A549 (cell line): ENCODE measurements at regions of chr17 and their contacts with region 1.

Region 1: DNA sequence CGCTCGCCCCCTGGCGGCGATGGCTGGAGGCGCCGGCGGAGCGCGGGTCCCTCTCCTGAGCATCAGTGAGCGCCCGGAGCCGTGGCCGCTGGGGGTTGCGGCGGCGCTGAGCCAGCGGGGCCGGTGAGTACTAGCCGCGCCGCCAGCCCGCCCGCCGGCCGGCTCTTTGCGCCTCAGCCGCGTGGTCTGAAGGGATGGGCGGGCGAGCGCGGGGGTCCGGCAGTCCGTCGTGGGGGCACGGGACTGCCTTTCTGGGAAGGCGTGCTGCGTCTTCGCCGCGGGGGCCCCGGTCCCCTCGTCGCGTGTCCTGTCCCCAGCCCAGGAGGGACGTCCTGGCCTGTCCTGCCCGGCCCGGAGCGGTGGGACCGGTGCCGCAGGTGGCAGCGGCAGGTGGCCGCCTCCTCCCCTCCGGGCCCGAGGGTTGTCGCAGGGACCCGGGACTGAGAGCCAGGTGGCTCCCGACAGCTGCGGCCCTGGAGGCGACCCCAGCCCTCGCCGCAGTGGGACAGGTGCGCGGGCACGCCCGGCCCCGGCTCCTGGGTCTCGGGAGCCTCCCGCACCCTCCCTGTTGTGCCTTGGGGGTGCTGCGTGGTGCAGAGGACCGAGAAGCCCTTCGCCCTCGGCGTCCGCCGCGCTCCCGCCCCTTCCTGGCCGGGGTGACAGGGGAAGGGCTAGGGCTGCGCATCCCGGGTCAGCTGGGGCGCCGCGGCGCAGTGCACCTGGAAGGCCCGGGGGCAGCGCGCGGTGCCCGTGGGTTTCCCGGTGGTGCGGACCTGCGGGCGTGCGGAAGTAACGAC is at the start of gene SPECC1:
- DNase-seq: peak; percentile 48 to 87
- ATAC-seq: peak; percentile 85 to 94
- H3K4me3 ChIP-seq: peak within 1 kb of the TSS; percentile 63
- H3K27ac ChIP-seq: peak within 1 kb of the TSS; percentile 88 to 93
- H3K4me1 ChIP-seq: peaks cover 25% of the 10 kb centered on the region
- CTCF ChIP-seq: peak; percentile 16; the same call in 2 of the 3 replicates
- EP300 ChIP-seq: no peak
- POLR2A ChIP-seq: peak; percentile 41; the same call in 1 of the 2 replicates
- RAD21 ChIP-seq: peak; percentile 37 to 64; a peak in 3 of 5 replicates
- polyA plus RNA-seq, gene SPECC1: 40.1 and 45.1 TPM in 2 replicates

Region 2: DNA sequence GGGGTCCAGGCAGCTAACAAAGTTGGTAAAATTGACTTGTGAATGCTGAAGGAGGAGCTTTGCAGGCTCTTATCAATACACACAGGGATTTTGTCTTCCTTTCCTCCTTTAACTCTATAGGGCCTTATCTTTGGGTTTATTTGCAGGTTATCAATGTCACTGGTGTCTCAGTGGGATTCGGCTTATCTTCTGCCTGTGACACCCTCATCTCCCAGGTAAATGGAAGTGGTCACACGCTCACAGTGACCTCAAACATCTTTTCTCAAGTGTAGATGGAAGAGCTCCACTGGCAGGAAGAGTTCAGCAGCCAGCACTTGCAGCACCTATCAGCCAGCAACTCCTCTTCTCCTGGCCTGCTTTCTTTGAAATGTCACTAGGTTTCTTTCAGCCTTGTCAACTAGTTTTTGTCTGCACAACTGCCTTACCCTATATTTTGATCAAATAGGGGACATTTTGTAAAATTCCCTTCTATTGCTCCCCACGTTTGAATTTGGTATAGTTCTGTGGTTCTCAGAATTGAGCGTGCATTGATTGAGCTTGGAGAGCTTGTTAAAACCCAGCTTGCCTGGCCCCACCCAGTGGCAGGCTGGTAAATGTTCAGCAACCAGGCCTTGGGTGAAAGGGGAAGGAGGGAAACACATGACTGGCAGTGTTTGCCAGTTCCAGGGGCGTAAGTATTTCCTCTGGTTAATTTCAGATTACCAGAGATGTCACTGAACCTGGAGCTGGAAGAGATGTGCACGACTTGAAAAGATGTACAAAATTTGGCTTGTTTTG is 463.0 kb before region 1 on chr17:
- CTCF ChIA-PET with region 1: no interaction called
- POLR2A ChIA-PET with region 1: no interaction called
- DNase-seq: no peak
- ATAC-seq: peak; percentile 60 to 69; a peak in 4 of 6 replicates
- H3K4me3 ChIP-seq: no peak overlapping the region
- H3K27ac ChIP-seq: no peak overlapping the region
- H3K4me1 ChIP-seq: no peaks in the 10 kb centered on the region; the same call in 2 of the 3 replicates
- CTCF ChIP-seq: no peak
- EP300 ChIP-seq: no peak
- POLR2A ChIP-seq: no peak
- RAD21 ChIP-seq: peak in 1 of 2 experiments; percentile 11; a peak in 1 of 5 replicates

Region 3: DNA sequence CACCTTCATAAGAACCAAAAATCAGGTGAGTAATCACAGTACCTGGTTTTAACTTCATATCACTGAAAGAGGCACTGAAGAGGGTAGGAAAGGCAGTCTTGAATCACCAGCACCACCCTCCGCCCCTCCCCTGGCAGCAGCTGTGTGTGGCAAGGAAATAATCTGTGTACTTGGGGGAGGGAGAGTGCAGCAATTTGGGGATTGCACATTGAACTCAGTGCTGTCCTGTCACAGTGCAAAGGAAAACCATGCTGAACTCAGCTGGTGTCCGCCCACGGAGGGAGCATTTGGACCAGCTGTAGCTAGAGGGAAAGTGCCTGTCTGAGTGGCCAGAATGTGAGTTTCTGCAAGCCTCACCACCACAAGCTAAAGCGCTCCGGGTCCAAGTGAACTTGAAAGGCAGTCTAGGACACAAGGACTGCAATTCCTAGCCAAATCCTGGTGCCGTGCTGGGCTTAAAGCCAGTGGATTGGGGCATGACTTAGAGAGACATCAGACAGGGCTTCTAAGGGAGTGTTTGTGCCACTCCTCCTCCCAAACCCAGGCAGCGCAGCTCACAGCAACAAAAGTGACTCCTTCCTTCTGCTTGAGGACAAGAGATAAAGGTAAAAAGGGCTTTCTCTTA is 221.7 kb before region 1 on chr17:
- CTCF ChIA-PET with region 1: no interaction called
- POLR2A ChIA-PET with region 1: no interaction called
- DNase-seq: no peak
- ATAC-seq: no peak; a peak in 1 of 6 replicates
- H3K4me3 ChIP-seq: no peak overlapping the region
- H3K27ac ChIP-seq: no peak overlapping the region
- H3K4me1 ChIP-seq: no peaks in the 10 kb centered on the region
- CTCF ChIP-seq: no peak
- EP300 ChIP-seq: no peak
- POLR2A ChIP-seq: no peak
- RAD21 ChIP-seq: no peak

Region 4: GRCh38 chr17:19867064-19867313 is 142.5 kb before region 1 on chr17:
- CTCF ChIA-PET with region 1: interaction called, 8 read pairs
- POLR2A ChIA-PET with region 1: interaction called, 11 read pairs
- DNase-seq: peak; percentile 76 to 81
- ATAC-seq: peak; percentile 85 to 87
- H3K4me3 ChIP-seq: peak overlapping the region; percentile 77
- H3K27ac ChIP-seq: peak overlapping the region; percentile 84 to 92
- H3K4me1 ChIP-seq: peaks cover 15% of the 10 kb centered on the region; the same call in 2 of the 3 replicates
- CTCF ChIP-seq: peak; percentile 34; the same call in 2 of the 3 replicates
- EP300 ChIP-seq: no peak
- POLR2A ChIP-seq: peak; percentile 41
- RAD21 ChIP-seq: peak in 1 of 2 experiments; percentile 21; a peak in 1 of 5 replicates

Region 5: GRCh38 chr17:19877364-19877945 is 132.0 kb before region 1 on chr17:
- CTCF ChIA-PET with region 1: no interaction called
- POLR2A ChIA-PET with region 1: no interaction called
- DNase-seq: no peak
- ATAC-seq: no peak
- H3K4me3 ChIP-seq: no peak overlapping the region
- H3K27ac ChIP-seq: no peak overlapping the region
- H3K4me1 ChIP-seq: no peaks in the 10 kb centered on the region
- CTCF ChIP-seq: no peak
- EP300 ChIP-seq: no peak
- POLR2A ChIP-seq: no peak
- RAD21 ChIP-seq: no peak

Region 6: GRCh38 chr17:19992803-19993713 is 16.4 kb before region 1 on chr17:
- CTCF ChIA-PET with region 1: interaction called, 240 read pairs
- POLR2A ChIA-PET with region 1: interaction called, 10 read pairs
- DNase-seq: peak; percentile 77 to 94
- ATAC-seq: peak; percentile 98 to 100
- H3K4me3 ChIP-seq: peak overlapping the region; percentile 38
- H3K27ac ChIP-seq: peak overlapping the region; percentile 84
- H3K4me1 ChIP-seq: peaks cover 11% of the 10 kb centered on the region
- CTCF ChIP-seq: peak; percentile 97
- EP300 ChIP-seq: no peak
- POLR2A ChIP-seq: no peak
- RAD21 ChIP-seq: peak; percentile 98

Region 7: DNA sequence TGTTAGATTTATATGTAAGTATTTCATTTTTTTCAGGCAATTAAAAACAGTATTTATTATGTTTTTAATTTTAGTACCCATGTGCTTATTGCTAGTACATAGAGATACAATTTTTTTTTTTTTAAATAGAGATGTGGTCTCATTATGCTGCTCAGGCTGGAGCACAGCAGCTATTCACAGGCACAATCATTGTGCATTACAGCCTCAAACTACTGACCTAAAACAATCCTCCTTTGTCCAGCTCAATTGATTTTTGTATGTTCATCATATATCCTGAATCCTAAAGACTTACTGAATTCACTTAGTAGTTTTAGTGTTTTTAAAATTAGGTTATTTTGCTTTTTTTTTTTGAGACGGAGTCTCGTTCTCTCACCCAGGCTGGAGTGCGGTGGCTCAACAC is 26.0 kb after region 1 on chr17:
- CTCF ChIA-PET with region 1: interaction called, 19 read pairs
- POLR2A ChIA-PET with region 1: no interaction called
- DNase-seq: no peak
- ATAC-seq: no peak
- H3K4me3 ChIP-seq: no peak overlapping the region
- H3K27ac ChIP-seq: no peak overlapping the region
- H3K4me1 ChIP-seq: no peaks in the 10 kb centered on the region
- CTCF ChIP-seq: no peak
- EP300 ChIP-seq: no peak
- POLR2A ChIP-seq: no peak
- RAD21 ChIP-seq: no peak

Region 8: GRCh38 chr17:20063665-20064648 is 54.5 kb after region 1 on chr17:
- CTCF ChIA-PET with region 1: interaction called, 60 read pairs
- POLR2A ChIA-PET with region 1: interaction called, 28 read pairs
- DNase-seq: peak; percentile 86 to 91
- ATAC-seq: peak; percentile 84 to 86
- H3K4me3 ChIP-seq: peak overlapping the region; percentile 1; the same call in 1 of the 3 replicates
- H3K27ac ChIP-seq: peak overlapping the region; percentile 89 to 90
- H3K4me1 ChIP-seq: peaks cover 77% of the 10 kb centered on the region
- CTCF ChIP-seq: no peak
- EP300 ChIP-seq: peak; percentile 22 to 56; a peak in 2 of 5 replicates
- POLR2A ChIP-seq: no peak
- RAD21 ChIP-seq: peak in 1 of 2 experiments; percentile 13; a peak in 2 of 5 replicates

Region 9: DNA sequence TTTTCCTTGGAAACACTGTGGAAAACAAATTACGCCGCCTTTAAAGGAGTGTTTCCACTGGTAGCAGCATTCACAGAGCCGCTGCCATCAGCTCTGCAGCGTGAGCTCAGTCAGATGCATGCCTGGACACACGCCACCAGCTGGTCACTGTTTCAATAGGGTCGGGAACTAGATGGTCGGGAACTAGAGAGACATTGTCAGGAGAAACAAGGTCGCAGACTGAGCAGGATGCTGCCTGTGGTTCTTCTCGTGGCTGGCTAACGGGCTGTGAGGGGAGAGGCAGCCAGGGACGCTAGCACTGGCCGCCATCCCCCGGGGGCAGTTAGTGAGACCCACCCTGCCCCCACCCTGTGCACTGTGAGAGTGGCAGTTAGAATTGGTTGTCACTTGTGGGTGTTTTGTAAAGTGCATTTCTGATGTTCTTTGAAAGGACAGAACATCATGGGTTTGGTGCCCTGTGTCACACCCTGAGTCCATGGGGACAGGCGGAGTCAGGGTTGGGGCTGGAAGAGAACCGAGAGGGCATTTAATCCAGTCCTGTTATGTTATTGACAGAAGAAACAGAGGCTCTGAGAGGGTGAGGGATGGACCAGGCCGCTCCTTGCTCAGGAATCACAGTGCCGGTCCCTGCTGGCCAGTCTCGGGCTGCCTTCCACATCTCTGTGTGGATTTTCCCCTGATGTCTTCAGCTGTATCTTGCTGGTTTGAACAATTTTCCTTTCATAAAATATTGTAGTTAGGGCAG is 86.0 kb after region 1 on chr17:
- CTCF ChIA-PET with region 1: interaction called, 66 read pairs
- POLR2A ChIA-PET with region 1: interaction called, 3 read pairs
- DNase-seq: peak; percentile 65 to 67
- ATAC-seq: peak; percentile 93 to 95
- H3K4me3 ChIP-seq: no peak overlapping the region
- H3K27ac ChIP-seq: peak overlapping the region; percentile 43 to 77; a peak in 5 of 6 replicates
- H3K4me1 ChIP-seq: peaks cover 22% of the 10 kb centered on the region
- CTCF ChIP-seq: peak; percentile 70
- EP300 ChIP-seq: no peak
- POLR2A ChIP-seq: no peak
- RAD21 ChIP-seq: peak; percentile 69 to 71

Region 10: GRCh38 chr17:20114466-20114865 is 105.0 kb after region 1 on chr17:
- CTCF ChIA-PET with region 1: interaction called, 28 read pairs
- POLR2A ChIA-PET with region 1: interaction called, 8 read pairs
- DNase-seq: no peak
- ATAC-seq: no peak
- H3K4me3 ChIP-seq: no peak overlapping the region
- H3K27ac ChIP-seq: no peak overlapping the region
- H3K4me1 ChIP-seq: peaks cover 6% of the 10 kb centered on the region; the same call in 2 of the 3 replicates
- CTCF ChIP-seq: no peak
- EP300 ChIP-seq: no peak
- POLR2A ChIP-seq: no peak
- RAD21 ChIP-seq: no peak